Activated CD8-positive, alpha-beta memory T cell treated with anti-CD3 and anti-CD28 coated beads, Interleukin-2, amount 10 ng/mL, durations not matched to agents 7 days and 5 days (primary cell): ENCODE measurements at regions of chr10 and their contacts with region 1.

Region 1: DNA sequence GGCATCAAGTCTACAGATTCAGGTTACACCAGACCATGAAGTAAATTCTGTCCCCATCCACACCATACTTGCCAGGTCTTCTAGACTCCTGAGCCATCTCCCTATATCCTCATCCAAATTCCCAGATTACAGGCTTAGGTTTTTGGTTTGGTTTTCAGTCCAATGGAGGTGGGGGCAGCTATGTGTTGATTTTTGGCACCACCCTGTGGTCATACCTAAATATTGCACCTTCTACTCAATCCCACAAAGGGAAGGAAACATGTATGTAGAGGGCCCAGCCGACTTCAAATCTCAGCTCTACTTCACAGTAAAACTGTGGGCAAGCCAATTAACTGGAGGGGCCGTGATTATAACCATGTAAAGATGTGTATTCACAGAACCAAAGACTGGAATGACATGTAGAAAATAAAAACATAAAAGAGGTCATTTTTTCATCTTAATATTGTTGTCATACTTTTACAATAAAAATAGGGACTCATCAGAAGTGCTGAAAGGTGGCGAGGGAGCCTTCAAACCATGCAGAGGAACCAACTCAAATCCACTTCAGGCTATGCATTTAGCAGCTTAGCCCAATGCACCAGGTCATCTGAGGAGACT is 19.8 kb downstream of the ERCC6 start:
- DNase-seq: peak; percentile 50
- ATAC-seq: peak; percentile 78
- H3K4me3 Mint-ChIP-seq: no peak overlapping the region
- H3K27ac Mint-ChIP-seq: no peak overlapping the region
- H3K4me1 Mint-ChIP-seq: no peaks in the 10 kb centered on the region
- H3K27me3 Mint-ChIP-seq: no peaks in the 10 kb centered on the region

Region 2: GRCh38 chr10:49407552-49408137 is 111.4 kb before region 1 on chr10:
- CTCF ChIA-PET with region 1: interaction called, 131 read pairs
- DNase-seq: peak; percentile 82
- ATAC-seq: peak; percentile 77
- H3K4me3 Mint-ChIP-seq: no peak overlapping the region
- H3K27ac Mint-ChIP-seq: no peak overlapping the region
- H3K4me1 Mint-ChIP-seq: no peaks in the 10 kb centered on the region
- H3K27me3 Mint-ChIP-seq: peaks cover 32% of the 10 kb centered on the region

Region 3: GRCh38 chr10:49471532-49471931 is 47.5 kb before region 1 on chr10:
- CTCF ChIA-PET with region 1: no interaction called
- DNase-seq: no peak
- ATAC-seq: no peak
- H3K4me3 Mint-ChIP-seq: no peak overlapping the region
- H3K27ac Mint-ChIP-seq: no peak overlapping the region
- H3K4me1 Mint-ChIP-seq: no peaks in the 10 kb centered on the region
- H3K27me3 Mint-ChIP-seq: no peaks in the 10 kb centered on the region

Region 4: GRCh38 chr10:49538381-49539319 is 19.6 kb after region 1 on chr10 and contains the start of gene ERCC6:
- CTCF ChIA-PET with region 1: interaction called, 18 read pairs
- DNase-seq: peak; percentile 98
- ATAC-seq: peak; percentile 95
- H3K4me3 Mint-ChIP-seq: peak within 1 kb of the TSS; percentile 86
- H3K27ac Mint-ChIP-seq: peak within 1 kb of the TSS; percentile 93
- H3K4me1 Mint-ChIP-seq: peaks cover 40% of the 10 kb centered on the region
- H3K27me3 Mint-ChIP-seq: peaks cover 4% of the 10 kb centered on the region
- total RNA-seq, gene ERCC6: 19.2 to 28.1 TPM